Dendritic cell treated with granulocyte-macrophage colony-stimulating factor and Interleukin-4, amounts not matched to agents 40 ng/mL and 50 ng/mL, for 4 days (primary cell): ENCODE measurements at regions of chr18 and their contacts with region 1.

Region 1: DNA sequence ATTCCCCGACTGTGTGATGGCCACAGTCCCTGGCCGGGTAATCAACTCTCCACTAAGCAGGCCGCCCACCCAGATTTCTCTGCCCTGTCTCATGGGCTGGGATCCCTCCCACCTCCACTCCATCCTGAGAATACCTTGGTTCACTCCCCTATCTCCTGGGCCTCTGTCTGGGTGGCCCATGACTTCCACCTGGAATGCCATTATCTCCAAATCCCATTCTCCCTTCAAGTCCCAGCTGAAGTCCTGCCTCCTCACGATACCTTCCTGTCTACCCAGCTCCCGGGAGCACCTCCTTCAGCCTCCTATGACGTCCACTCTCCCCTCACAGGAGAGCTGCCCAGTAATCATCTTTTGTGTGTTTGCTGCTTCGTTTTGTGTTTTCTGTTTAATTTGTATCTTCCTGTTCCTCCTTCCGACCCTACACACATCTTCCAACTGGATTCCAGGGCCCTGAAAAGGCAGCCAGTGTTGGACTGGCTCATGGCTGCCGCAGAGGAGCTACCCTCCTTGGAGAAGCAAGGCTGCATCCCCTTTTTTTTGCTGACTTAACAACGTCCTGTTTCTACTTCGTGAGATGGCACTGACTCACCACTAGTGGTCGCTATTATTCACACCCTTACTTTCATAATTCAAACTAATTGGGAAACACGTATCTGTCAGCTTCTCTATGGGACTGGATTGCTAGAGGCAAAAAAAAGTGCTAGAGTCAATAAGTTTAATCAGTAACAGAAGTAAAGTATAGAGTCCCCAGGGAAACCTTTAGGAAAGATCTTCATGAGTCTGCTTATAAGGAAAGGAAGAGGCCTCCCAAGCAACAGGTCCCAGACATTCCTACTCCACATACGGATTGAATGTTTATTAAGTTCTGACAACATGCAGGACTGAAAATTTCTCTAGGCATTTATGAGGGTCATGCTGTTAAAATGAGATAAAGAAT is 171.9 kb upstream of the GATA6 start:
- H3K4me3 Mint-ChIP-seq: no peak overlapping the region
- H3K27ac Mint-ChIP-seq: no peak overlapping the region
- H3K4me1 Mint-ChIP-seq: peaks cover 5% of the 10 kb centered on the region
- H3K27me3 Mint-ChIP-seq: no peaks in the 10 kb centered on the region

Region 2: DNA sequence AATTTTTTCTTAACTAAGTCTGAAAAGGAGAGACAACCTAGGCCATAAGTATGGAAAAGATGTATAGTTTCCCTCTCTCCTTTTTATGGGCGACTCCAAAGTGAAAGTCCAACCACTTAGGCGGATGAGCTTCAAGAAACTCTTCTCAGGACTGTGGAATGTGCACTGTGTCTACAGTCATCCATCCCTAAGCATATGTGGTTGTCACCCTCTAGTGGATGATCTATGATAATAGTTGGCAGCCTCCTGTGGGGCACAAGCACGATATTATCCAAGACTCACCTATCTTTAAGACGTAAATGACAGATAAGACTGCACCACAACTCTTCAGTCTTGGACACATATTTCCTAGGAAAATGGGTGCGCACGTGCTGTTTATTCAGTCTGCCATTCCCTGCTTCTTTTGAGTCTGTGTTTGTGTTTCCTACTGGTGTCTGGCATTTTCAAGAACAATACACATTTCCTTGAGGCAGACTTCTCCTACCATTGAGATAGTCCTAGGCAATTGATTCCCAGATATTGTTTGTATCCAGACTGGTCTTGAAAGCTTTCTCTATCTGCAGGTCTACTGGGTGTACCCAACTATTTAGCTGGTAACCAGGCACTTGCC is 565.7 kb after region 1 on chr18:
- intact Hi-C with region 1: loop called (anchors 5 kb)
- H3K4me3 Mint-ChIP-seq: no peak overlapping the region
- H3K27ac Mint-ChIP-seq: no peak overlapping the region
- H3K4me1 Mint-ChIP-seq: peaks cover 4% of the 10 kb centered on the region
- H3K27me3 Mint-ChIP-seq: peaks cover 24% of the 10 kb centered on the region

Region 3: DNA sequence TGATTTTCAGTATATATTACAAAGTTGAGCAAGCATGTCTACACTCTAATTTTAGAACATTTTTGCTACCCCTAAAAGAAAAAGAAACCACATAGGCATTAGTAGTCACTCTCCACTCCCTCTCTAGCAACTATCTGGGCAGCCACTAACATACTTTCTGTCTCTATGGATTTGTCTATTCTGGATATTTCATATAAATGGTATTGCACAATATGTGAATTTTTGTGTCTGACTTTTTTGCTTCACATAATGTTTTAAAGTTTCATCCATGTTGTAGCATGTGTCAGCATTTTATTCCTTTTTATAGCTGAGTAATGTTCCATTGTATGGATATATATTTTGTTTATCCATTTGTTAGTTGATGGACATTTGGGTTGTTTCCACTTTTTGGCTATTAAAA is 652.8 kb after region 1 on chr18:
- intact Hi-C with region 1: no loop called
- H3K4me3 Mint-ChIP-seq: no peak overlapping the region
- H3K27ac Mint-ChIP-seq: no peak overlapping the region
- H3K4me1 Mint-ChIP-seq: no peaks in the 10 kb centered on the region
- H3K27me3 Mint-ChIP-seq: no peaks in the 10 kb centered on the region